ENCODE measurements at regions of chr1 and their contacts with region 1.

Region 1: GRCh38 chr1:93629099-93630059 is 52.3 kb downstream of the BCAR3 start:
- DNase-seq: no peak
- ATAC-seq: peak; percentile 74

Region 2: DNA sequence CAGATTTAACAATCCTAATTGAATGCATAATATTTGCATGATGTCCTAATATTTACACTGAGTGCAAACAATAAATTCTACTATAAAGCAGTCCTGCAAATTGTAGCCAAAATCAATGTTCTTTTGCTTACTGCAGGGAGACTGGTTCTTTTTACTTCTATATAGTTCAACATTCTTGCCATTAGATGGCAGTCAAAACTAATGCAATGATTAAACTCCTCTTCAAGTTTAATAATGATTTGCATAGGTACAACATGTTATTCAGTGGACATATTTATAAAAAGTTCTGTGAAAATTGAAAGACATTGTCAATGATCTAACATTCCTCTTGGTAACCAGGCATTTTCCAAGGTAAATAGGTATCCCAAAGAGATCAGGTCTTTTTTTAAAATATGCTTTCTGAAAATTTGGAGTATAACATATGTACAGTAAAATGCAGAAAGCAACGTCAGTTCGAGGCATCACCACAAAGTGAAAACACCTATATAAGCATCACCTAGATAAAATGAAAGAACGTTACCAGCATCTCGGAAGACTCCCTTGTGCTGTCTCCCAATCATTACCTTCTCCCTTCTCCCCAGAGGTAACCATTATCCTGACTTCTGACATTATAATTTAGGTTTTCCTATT is 191.3 kb before region 1 on chr1:
- intact Hi-C with region 1: loop called (anchors 5 kb)
- DNase-seq: no peak
- ATAC-seq: peak; percentile 73

Region 3: DNA sequence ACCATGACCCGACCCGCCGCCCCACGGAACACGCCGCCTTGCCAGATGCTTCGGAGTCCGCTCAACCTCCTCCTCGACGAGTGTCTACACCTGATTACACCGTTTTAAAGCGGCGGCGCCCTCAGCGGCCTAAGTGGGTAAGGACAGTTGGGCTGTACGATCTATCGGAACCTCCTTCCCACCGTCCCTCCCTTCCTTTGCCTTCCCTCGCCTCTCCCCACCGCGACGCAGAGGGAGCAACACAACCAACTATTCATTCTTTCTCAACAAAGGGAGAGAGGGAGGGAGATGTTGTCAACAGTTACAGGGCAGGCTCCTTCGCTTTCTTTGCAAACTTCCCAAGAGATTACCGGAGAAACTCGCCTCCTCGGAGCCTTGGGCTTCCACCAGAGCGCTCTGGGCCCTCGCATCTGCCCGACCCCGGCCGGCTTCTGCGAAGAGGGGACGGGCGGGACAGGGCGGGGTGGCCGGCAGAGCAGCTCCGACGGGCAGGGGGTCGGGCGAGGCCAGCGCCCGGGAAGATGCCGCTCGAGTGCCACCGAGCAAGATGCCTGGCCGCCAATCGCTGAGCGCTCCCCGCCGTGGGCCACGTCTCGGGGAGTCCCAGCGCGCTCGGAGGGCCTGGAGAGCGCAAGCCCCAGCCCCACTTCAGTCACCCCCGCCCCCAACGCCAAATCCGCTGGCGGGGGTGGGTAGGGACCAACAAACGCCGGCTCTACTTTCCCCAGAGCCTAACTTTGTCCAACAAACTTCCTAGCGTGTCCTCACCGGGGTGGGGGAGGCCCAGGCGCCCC is 51.6 kb after region 1 on chr1:
- intact Hi-C with region 1: loop called (anchors 5 kb)
- DNase-seq: peak; percentile 91
- ATAC-seq: peak; percentile 91

Measured in Right ventricle myocardium superior (tissue), 1 donor.